ENCODE measurements at regions of chr5 and their contacts with region 1.

Region 1: DNA sequence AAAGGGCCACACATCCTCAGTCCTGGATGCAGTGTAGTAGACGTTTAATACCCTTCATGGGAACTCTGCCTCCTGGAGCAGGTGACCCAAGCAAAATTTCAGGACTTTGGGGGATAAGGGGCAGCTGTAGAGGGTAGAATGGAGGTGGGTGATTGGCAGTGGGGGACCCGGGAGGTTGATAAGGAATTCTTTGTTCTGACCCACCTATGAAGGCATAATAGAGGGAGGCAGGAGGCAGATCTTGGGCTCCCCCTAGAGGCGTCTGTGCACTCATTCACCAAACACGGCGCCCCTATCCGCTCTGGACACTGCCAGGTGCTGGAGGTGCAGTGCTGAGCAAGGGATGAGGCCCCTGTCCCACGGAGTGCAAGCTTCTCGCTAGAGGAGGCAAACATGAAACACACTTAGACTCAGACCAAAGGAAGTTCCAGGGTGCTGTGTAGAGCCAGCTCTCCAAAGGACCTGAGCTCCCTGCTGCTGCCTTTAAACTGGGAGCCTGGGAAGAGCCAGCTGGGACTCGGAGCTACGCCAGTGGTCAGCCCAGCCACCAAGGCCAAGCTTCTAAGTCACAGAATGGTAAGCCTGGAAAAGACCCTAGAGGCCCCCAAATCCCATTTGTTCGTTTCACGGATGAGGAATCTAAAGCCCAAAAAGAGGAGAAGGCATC is 7.7 kb downstream of the IL17B start:
- DNase-seq: peak; percentile 73
- H3K4me3 ChIP-seq: no peak overlapping the region
- H3K27ac ChIP-seq: no peak overlapping the region
- H3K4me1 ChIP-seq: no peaks in the 10 kb centered on the region
- H3K27me3 ChIP-seq: no peaks in the 10 kb centered on the region

Region 2: GRCh38 chr5:149561848-149562247 is 190.4 kb after region 1 on chr5:
- in situ Hi-C with region 1: loop called (anchors 10 kb)
- DNase-seq: peak; percentile 96
- H3K4me3 ChIP-seq: peak overlapping the region; percentile 64
- H3K27ac ChIP-seq: peak overlapping the region; percentile 79
- H3K4me1 ChIP-seq: peaks cover 55% of the 10 kb centered on the region
- H3K27me3 ChIP-seq: no peaks in the 10 kb centered on the region

Measured in GM23248 (cell line).